ENCODE measurements at regions of chr3 and their contacts with region 1.

Region 1: GRCh38 chr3:58299839-58300516 is 6.1 kb upstream of the RPP14 start:
- DNase-seq: no peak
- H3K4me3 ChIP-seq: no peak overlapping the region
- H3K27ac ChIP-seq: no peak overlapping the region
- H3K4me1 ChIP-seq: no peaks in the 10 kb centered on the region
- H3K27me3 ChIP-seq: no peaks in the 10 kb centered on the region
- CTCF ChIP-seq: peak; percentile 29 to 64 (median 55)
- POLR2A ChIP-seq: no peak

Region 2: GRCh38 chr3:58179235-58180098 is 120.5 kb before region 1 on chr3:
- intact Hi-C with region 1: loop called (anchors 5 kb)
- DNase-seq: no peak
- H3K4me3 ChIP-seq: no peak overlapping the region
- H3K27ac ChIP-seq: no peak overlapping the region
- H3K4me1 ChIP-seq: peaks cover 28% of the 10 kb centered on the region
- H3K27me3 ChIP-seq: no peaks in the 10 kb centered on the region
- CTCF ChIP-seq: no peak
- POLR2A ChIP-seq: no peak

Region 3: GRCh38 chr3:58206406-58207011 is 93.5 kb before region 1 on chr3:
- intact Hi-C with region 1: no loop called
- DNase-seq: no peak
- H3K4me3 ChIP-seq: no peak overlapping the region
- H3K27ac ChIP-seq: no peak overlapping the region
- H3K4me1 ChIP-seq: no peaks in the 10 kb centered on the region
- H3K27me3 ChIP-seq: no peaks in the 10 kb centered on the region
- CTCF ChIP-seq: no peak
- POLR2A ChIP-seq: no peak

Region 4: GRCh38 chr3:58237238-58237940 is 62.6 kb before region 1 on chr3 and contains the start of gene ABHD6:
- intact Hi-C with region 1: loop called (anchors 10 kb)
- DNase-seq: peak; percentile 77
- H3K4me3 ChIP-seq: peak within 1 kb of the TSS; percentile 77 to 88
- H3K27ac ChIP-seq: peak within 1 kb of the TSS; percentile 82 to 87
- H3K4me1 ChIP-seq: peaks cover 14% of the 10 kb centered on the region
- H3K27me3 ChIP-seq: no peaks in the 10 kb centered on the region
- CTCF ChIP-seq: peak; percentile 31 to 46 (median 42)
- POLR2A ChIP-seq: no peak
- total RNA-seq, gene ABHD6: 12.1 to 17.8 TPM